ENCODE measurements at regions of chr11 and their contacts with region 1.

Region 1: GRCh38 chr11:72683782-72684200 is 9.6 kb upstream of the PDE2A start:
- DNase-seq: peak; percentile 43 to 58 (median 53)
- H3K4me3 ChIP-seq: no peak overlapping the region
- H3K4me3 Mint-ChIP-seq: no peak overlapping the region
- H3K27ac ChIP-seq: no peak overlapping the region
- H3K27ac Mint-ChIP-seq: peak overlapping the region in 2 of 7 donors; percentile 13 to 57
- H3K4me1 ChIP-seq: no peaks in the 10 kb centered on the region
- H3K4me1 Mint-ChIP-seq: peaks cover 11 to 23% (median 15%) of the 10 kb centered on the region in 4 donors
- H3K27me3 ChIP-seq: no peaks in the 10 kb centered on the region
- H3K27me3 Mint-ChIP-seq: no peaks in the 10 kb centered on the region

Region 2: GRCh38 chr11:72848846-72849466 is 165.2 kb after region 1 on chr11:
- CTCF ChIA-PET with region 1: interaction called, 9 read pairs
- POLR2A ChIA-PET with region 1: no interaction called
- intact Hi-C with region 1: loop called (anchors 2 kb)
- DNase-seq: peak; percentile 42 to 57 (median 47)
- H3K4me3 ChIP-seq: no peak overlapping the region
- H3K4me3 Mint-ChIP-seq: no peak overlapping the region
- H3K27ac ChIP-seq: no peak overlapping the region
- H3K27ac Mint-ChIP-seq: peak overlapping the region in 2 of 7 donors; percentile 42 to 56
- H3K4me1 ChIP-seq: no peaks in the 10 kb centered on the region
- H3K4me1 Mint-ChIP-seq: peaks cover 7 to 14% (median 11%) of the 10 kb centered on the region in 4 donors
- H3K27me3 ChIP-seq: no peaks in the 10 kb centered on the region
- H3K27me3 Mint-ChIP-seq: no peaks in the 10 kb centered on the region

Region 3: GRCh38 chr11:72996959-72997358 is 313.2 kb after region 1 on chr11:
- CTCF ChIA-PET with region 1: no interaction called
- POLR2A ChIA-PET with region 1: no interaction called
- intact Hi-C with region 1: no loop called
- DNase-seq: no peak
- H3K4me3 ChIP-seq: no peak overlapping the region
- H3K4me3 Mint-ChIP-seq: no peak overlapping the region
- H3K27ac ChIP-seq: no peak overlapping the region
- H3K27ac Mint-ChIP-seq: peak overlapping the region in 1 of 7 donors; percentile 4
- H3K4me1 ChIP-seq: no peaks in the 10 kb centered on the region
- H3K4me1 Mint-ChIP-seq: peaks cover 0 to 9% (median 6%) of the 10 kb centered on the region in 4 donors
- H3K27me3 ChIP-seq: no peaks in the 10 kb centered on the region
- H3K27me3 Mint-ChIP-seq: no peaks in the 10 kb centered on the region

Measured in CD4-positive, alpha-beta memory T cell (primary cell).